ENCODE measurements at regions of chr6 and their contacts with region 1.

Region 1: GRCh38 chr6:28838634-28839442 is 84.9 kb downstream of the TRIM27 start:
- DNase-seq: peak; percentile 65 to 86 (median 72)
- H3K4me3 ChIP-seq: peak overlapping the region; percentile 73
- H3K4me3 Mint-ChIP-seq: peak overlapping the region; percentile 83 to 97 (median 91)
- H3K27ac ChIP-seq: peak overlapping the region; percentile 52
- H3K27ac Mint-ChIP-seq: peak overlapping the region; percentile 66 to 91 (median 85)
- H3K4me1 ChIP-seq: peaks cover 7% of the 10 kb centered on the region
- H3K4me1 Mint-ChIP-seq: peaks cover 22 to 28% (median 25%) of the 10 kb centered on the region in 3 donors
- H3K27me3 ChIP-seq: no peaks in the 10 kb centered on the region
- H3K27me3 Mint-ChIP-seq: peaks cover 26 to 46% of the 10 kb centered on the region in 2 donors

Region 2: GRCh38 chr6:28863604-28864320 is 24.9 kb after region 1 on chr6:
- CTCF ChIA-PET with region 1: interaction called, 73 read pairs
- POLR2A ChIA-PET with region 1: interaction called, 9 read pairs
- DNase-seq: peak; percentile 55 to 90 (median 85)
- H3K4me3 ChIP-seq: peak overlapping the region; percentile 75
- H3K4me3 Mint-ChIP-seq: peak overlapping the region; percentile 91 to 96 (median 93)
- H3K27ac ChIP-seq: peak overlapping the region; percentile 78
- H3K27ac Mint-ChIP-seq: peak overlapping the region; percentile 75 to 96 (median 92)
- H3K4me1 ChIP-seq: peaks cover 24% of the 10 kb centered on the region
- H3K4me1 Mint-ChIP-seq: peaks cover 37 to 52% (median 42%) of the 10 kb centered on the region in 3 donors
- H3K27me3 ChIP-seq: no peaks in the 10 kb centered on the region
- H3K27me3 Mint-ChIP-seq: peaks cover 2 to 14% of the 10 kb centered on the region in 2 donors

Region 3: GRCh38 chr6:28895134-28895812 is 56.4 kb after region 1 on chr6:
- CTCF ChIA-PET with region 1: interaction called, 37 read pairs
- POLR2A ChIA-PET with region 1: interaction called, 16 read pairs
- DNase-seq: peak; percentile 78 to 96 (median 90)
- H3K4me3 ChIP-seq: peak overlapping the region; percentile 91
- H3K4me3 Mint-ChIP-seq: peak overlapping the region; percentile 98 to 100 (median 99)
- H3K27ac ChIP-seq: peak overlapping the region; percentile 99
- H3K27ac Mint-ChIP-seq: peak overlapping the region; percentile 99 to 100 (median 99)
- H3K4me1 ChIP-seq: peaks cover 7% of the 10 kb centered on the region
- H3K4me1 Mint-ChIP-seq: peaks cover 15 to 27% (median 22%) of the 10 kb centered on the region in 3 donors
- H3K27me3 ChIP-seq: no peaks in the 10 kb centered on the region
- H3K27me3 Mint-ChIP-seq: peaks cover 3 to 10% of the 10 kb centered on the region in 2 donors

Region 4: DNA sequence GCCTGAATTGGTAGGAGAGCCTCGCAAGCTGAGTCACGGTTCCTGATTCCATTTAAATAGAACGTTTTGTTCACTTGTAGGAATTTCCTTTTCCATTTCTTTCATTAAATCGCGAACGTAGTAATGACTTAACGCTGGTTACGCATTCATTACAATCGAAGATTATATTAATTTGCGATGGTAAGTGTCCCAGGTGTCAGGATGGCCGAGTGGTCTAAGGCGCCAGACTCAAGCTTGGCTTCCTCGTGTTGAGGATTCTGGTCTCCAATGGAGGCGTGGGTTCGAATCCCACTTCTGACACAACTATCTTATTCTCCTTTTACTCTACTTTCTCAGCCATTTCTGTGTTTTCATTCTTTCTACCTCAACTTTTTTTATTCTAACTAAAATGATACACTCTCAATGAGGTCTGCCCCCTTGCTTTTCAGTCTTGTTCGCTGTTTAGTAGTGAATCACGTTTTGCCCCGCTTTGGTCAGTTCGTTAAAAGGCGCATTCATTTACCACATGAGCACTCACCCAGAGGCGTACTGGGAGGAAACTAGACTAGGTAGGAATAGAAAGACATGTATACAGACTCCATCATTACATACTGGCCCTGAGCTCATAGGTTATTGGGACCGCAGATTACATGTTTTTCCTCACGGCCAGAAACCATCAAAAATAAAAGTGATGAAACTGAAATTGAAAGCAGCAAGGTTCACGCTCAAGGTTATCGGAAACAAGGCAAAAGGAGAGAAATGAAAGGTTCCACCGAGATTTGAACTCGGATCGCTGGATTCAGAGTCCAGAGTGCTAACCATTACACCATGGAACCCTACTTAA is 102.2 kb after region 1 on chr6:
- CTCF ChIA-PET with region 1: interaction called, 14 read pairs
- POLR2A ChIA-PET with region 1: interaction called, 5 read pairs
- DNase-seq: peak; percentile 48 to 82 (median 81)
- H3K4me3 ChIP-seq: peak overlapping the region; percentile 84
- H3K4me3 Mint-ChIP-seq: peak overlapping the region; percentile 89 to 98 (median 93)
- H3K27ac ChIP-seq: peak overlapping the region; percentile 86
- H3K27ac Mint-ChIP-seq: peak overlapping the region; percentile 91 to 97 (median 94)
- H3K4me1 ChIP-seq: peaks cover 35% of the 10 kb centered on the region
- H3K4me1 Mint-ChIP-seq: peaks cover 42 to 58% (median 52%) of the 10 kb centered on the region in 3 donors
- H3K27me3 ChIP-seq: no peaks in the 10 kb centered on the region
- H3K27me3 Mint-ChIP-seq: peaks cover 0 to 20% of the 10 kb centered on the region in 2 donors

Region 5: GRCh38 chr6:29005183-29005885 is 166.5 kb after region 1 on chr6 and contains the start of gene ZNF311:
- CTCF ChIA-PET with region 1: interaction called, 10 read pairs
- POLR2A ChIA-PET with region 1: interaction called, 3 read pairs
- DNase-seq: peak in 1 of 5 donors; percentile 53
- H3K4me3 ChIP-seq: peak within 1 kb of the TSS; percentile 57
- H3K4me3 Mint-ChIP-seq: peak within 1 kb of the TSS; percentile 81 to 90 (median 88)
- H3K27ac ChIP-seq: peak within 1 kb of the TSS; percentile 29
- H3K27ac Mint-ChIP-seq: peak within 1 kb of the TSS in 3 of 8 donors; percentile 6 to 81 (median 42)
- H3K4me1 ChIP-seq: peaks cover 7% of the 10 kb centered on the region
- H3K4me1 Mint-ChIP-seq: peaks cover 13 to 19% (median 15%) of the 10 kb centered on the region in 3 donors
- H3K27me3 ChIP-seq: no peaks in the 10 kb centered on the region
- H3K27me3 Mint-ChIP-seq: peaks cover 33 to 40% of the 10 kb centered on the region in 2 donors
- total RNA-seq, gene ZNF311: 0.66 to 0.73 TPM

Region 6: GRCh38 chr6:29589423-29590048 is 750.7 kb after region 1 on chr6:
- CTCF ChIA-PET with region 1: interaction called, 12 read pairs
- POLR2A ChIA-PET with region 1: no interaction called
- DNase-seq: peak; percentile 10 to 64 (median 28)
- H3K4me3 ChIP-seq: no peak overlapping the region
- H3K4me3 Mint-ChIP-seq: no peak overlapping the region
- H3K27ac ChIP-seq: no peak overlapping the region
- H3K27ac Mint-ChIP-seq: no peak overlapping the region
- H3K4me1 ChIP-seq: no peaks in the 10 kb centered on the region
- H3K4me1 Mint-ChIP-seq: no peaks in the 10 kb centered on the region
- H3K27me3 ChIP-seq: no peaks in the 10 kb centered on the region
- H3K27me3 Mint-ChIP-seq: peaks cover 23 to 70% of the 10 kb centered on the region in 2 donors